B cell (primary cell): ENCODE measurements at regions of chr17 and their contacts with region 1.

Region 1: DNA sequence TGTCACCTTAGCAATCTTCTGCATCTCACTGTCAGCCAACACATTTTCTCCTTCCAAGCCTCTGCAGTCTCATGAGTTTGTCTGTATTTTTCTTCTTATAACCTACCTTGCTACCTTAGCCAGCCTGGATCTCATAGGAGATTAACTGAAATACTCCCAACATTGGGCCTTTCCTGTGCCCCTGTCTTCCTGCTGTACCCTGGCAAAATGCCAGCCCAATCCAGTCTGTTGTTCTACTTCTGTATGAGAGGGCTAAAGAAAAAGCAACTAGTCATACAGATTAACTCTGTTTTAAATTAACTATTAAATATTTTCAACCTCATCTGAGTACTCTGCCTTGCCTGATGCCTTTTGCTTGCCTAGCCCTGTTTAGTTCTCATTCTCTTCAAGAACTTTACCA is 18.4 kb downstream of the GOSR1 start:
- DNase-seq: no peak
- ATAC-seq: no peak
- H3K4me3 ChIP-seq: no peak overlapping the region
- H3K4me3 Mint-ChIP-seq: no peak overlapping the region
- H3K27ac ChIP-seq: no peak overlapping the region
- H3K27ac Mint-ChIP-seq: no peak overlapping the region
- H3K4me1 ChIP-seq: no peaks in the 10 kb centered on the region
- H3K4me1 Mint-ChIP-seq: peaks cover 1% of the 10 kb centered on the region
- H3K27me3 ChIP-seq: no peaks in the 10 kb centered on the region
- H3K27me3 Mint-ChIP-seq: no peaks in the 10 kb centered on the region
- CTCF ChIP-seq: no peak

Region 2: GRCh38 chr17:30513346-30513745 is 17.8 kb after region 1 on chr17:
- CTCF ChIA-PET with region 1: no interaction called
- POLR2A ChIA-PET with region 1: interaction called, 10 read pairs
- intact Hi-C with region 1: no loop called
- DNase-seq: no peak
- ATAC-seq: no peak
- H3K4me3 ChIP-seq: no peak overlapping the region
- H3K4me3 Mint-ChIP-seq: no peak overlapping the region
- H3K27ac ChIP-seq: no peak overlapping the region
- H3K27ac Mint-ChIP-seq: no peak overlapping the region
- H3K4me1 ChIP-seq: no peaks in the 10 kb centered on the region
- H3K4me1 Mint-ChIP-seq: no peaks in the 10 kb centered on the region
- H3K27me3 ChIP-seq: no peaks in the 10 kb centered on the region
- H3K27me3 Mint-ChIP-seq: no peaks in the 10 kb centered on the region
- CTCF ChIP-seq: no peak